CD4-positive, alpha-beta T cell (primary cell): ENCODE measurements at regions of chr10 and their contacts with region 1.

Region 1: GRCh38 chr10:98467506-98468346 is 21.0 kb upstream of the HPS1 start:
- DNase-seq: peak; percentile 29 to 89 (median 54)
- ATAC-seq: peak; percentile 94
- H3K4me3 ChIP-seq: peak overlapping the region; percentile 76
- H3K4me3 Mint-ChIP-seq: peak overlapping the region; percentile 99
- H3K27ac ChIP-seq: no peak overlapping the region
- H3K27ac Mint-ChIP-seq: peak overlapping the region; percentile 40
- H3K4me1 ChIP-seq: peaks cover 5% of the 10 kb centered on the region
- H3K4me1 Mint-ChIP-seq: peaks cover 10% of the 10 kb centered on the region
- H3K27me3 ChIP-seq: peaks cover 0 to 7% of the 10 kb centered on the region in 2 experiments
- H3K27me3 Mint-ChIP-seq: peaks cover 13% of the 10 kb centered on the region
- CTCF ChIP-seq: peak; percentile 75

Region 2: GRCh38 chr10:97903128-97904017 is 564.4 kb before region 1 on chr10:
- CTCF ChIA-PET with region 1: no interaction called
- POLR2A ChIA-PET with region 1: no interaction called
- intact Hi-C with region 1: no loop called
- DNase-seq: no peak
- ATAC-seq: no peak
- H3K4me3 ChIP-seq: no peak overlapping the region
- H3K4me3 Mint-ChIP-seq: no peak overlapping the region
- H3K27ac ChIP-seq: no peak overlapping the region
- H3K27ac Mint-ChIP-seq: no peak overlapping the region
- H3K4me1 ChIP-seq: no peaks in the 10 kb centered on the region
- H3K4me1 Mint-ChIP-seq: no peaks in the 10 kb centered on the region
- H3K27me3 ChIP-seq: peaks cover 0 to 3% of the 10 kb centered on the region in 2 experiments
- H3K27me3 Mint-ChIP-seq: peaks cover 32% of the 10 kb centered on the region
- CTCF ChIP-seq: no peak

Region 3: GRCh38 chr10:98224509-98224908 is 243.2 kb before region 1 on chr10:
- CTCF ChIA-PET with region 1: no interaction called
- POLR2A ChIA-PET with region 1: no interaction called
- intact Hi-C with region 1: no loop called
- DNase-seq: no peak
- ATAC-seq: no peak
- H3K4me3 ChIP-seq: no peak overlapping the region
- H3K4me3 Mint-ChIP-seq: no peak overlapping the region
- H3K27ac ChIP-seq: no peak overlapping the region
- H3K27ac Mint-ChIP-seq: no peak overlapping the region
- H3K4me1 ChIP-seq: no peaks in the 10 kb centered on the region
- H3K4me1 Mint-ChIP-seq: peaks cover 21% of the 10 kb centered on the region
- H3K27me3 ChIP-seq: no peaks in the 10 kb centered on the region
- H3K27me3 Mint-ChIP-seq: no peaks in the 10 kb centered on the region
- CTCF ChIP-seq: no peak

Region 4: DNA sequence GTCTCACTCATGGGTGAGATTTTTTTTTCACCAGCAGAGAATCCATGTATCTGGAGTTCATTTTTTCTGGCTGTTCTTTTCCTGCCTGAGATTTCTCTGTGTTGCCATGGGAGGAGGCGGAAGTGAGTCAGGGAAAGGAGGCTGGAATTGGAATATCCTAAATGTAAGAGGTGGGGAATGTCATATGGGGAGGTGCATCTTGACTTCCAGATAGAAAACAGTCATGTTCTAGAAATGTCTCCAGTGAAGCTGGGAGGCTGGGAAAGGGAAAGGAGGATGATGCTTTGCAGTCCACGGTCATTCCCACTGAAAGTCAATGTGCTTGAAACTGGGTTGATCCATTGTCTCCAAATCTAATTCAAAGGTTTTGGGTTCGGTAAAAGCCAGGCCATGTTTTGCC is 18.7 kb after region 1 on chr10:
- CTCF ChIA-PET with region 1: no interaction called
- POLR2A ChIA-PET with region 1: no interaction called
- intact Hi-C with region 1: no loop called
- DNase-seq: no peak
- ATAC-seq: no peak
- H3K4me3 ChIP-seq: no peak overlapping the region
- H3K4me3 Mint-ChIP-seq: no peak overlapping the region
- H3K27ac ChIP-seq: no peak overlapping the region
- H3K27ac Mint-ChIP-seq: no peak overlapping the region
- H3K4me1 ChIP-seq: peaks cover 3% of the 10 kb centered on the region
- H3K4me1 Mint-ChIP-seq: no peaks in the 10 kb centered on the region
- H3K27me3 ChIP-seq: peaks cover 0 to 2% of the 10 kb centered on the region in 2 experiments
- H3K27me3 Mint-ChIP-seq: peaks cover 26% of the 10 kb centered on the region
- CTCF ChIP-seq: no peak

Region 5: DNA sequence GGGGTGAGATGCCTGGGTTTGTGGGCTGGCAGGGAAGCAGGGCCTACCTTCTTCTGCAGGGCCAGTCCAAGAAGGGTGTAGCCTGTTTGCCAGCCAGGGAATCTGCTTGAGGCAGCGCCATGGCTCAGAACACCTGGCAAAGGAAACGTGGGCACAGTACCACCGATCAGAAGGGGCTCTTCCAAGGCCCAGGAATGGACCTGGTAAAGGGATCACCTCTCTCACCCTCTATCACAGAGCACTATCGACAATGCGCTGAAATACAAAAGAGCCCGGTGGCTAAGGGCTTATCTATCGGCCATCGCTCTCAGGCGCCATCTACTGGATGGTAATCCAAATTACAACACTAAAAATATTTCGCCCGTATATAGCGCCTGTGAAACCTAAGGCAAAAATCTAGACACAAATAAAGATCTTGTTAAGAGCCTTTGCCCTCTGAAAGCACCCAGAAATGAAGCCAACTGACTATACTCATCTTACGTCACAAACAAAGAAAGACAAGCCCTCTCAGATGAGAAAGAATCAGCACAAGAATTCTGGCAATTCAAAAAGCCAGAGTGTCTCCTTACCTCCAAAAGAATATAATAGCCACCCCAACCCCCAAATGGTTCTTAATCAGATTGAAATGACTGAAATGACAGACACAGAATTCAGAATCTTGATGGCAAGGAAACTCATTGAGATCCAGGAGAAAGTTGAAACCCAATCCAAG is 196.8 kb after region 1 on chr10:
- CTCF ChIA-PET with region 1: interaction called, 6 read pairs
- POLR2A ChIA-PET with region 1: no interaction called
- intact Hi-C with region 1: loop called in 1 of 2 experiments (anchors 1 kb)
- DNase-seq: peak in 8 of 14 experiments; percentile 0 to 65 (median 27)
- ATAC-seq: no peak
- H3K4me3 ChIP-seq: no peak overlapping the region
- H3K4me3 Mint-ChIP-seq: no peak overlapping the region
- H3K27ac ChIP-seq: no peak overlapping the region
- H3K27ac Mint-ChIP-seq: no peak overlapping the region
- H3K4me1 ChIP-seq: no peaks in the 10 kb centered on the region
- H3K4me1 Mint-ChIP-seq: no peaks in the 10 kb centered on the region
- H3K27me3 ChIP-seq: peaks cover 0 to 3% of the 10 kb centered on the region in 2 experiments
- H3K27me3 Mint-ChIP-seq: peaks cover 31% of the 10 kb centered on the region
- CTCF ChIP-seq: peak; percentile 61

Region 6: GRCh38 chr10:99248824-99249223 is 781.1 kb after region 1 on chr10:
- CTCF ChIA-PET with region 1: interaction called, 14 read pairs
- POLR2A ChIA-PET with region 1: interaction called, 8 read pairs
- intact Hi-C with region 1: loop called (anchors 1 kb)
- DNase-seq: no peak
- ATAC-seq: no peak
- H3K4me3 ChIP-seq: no peak overlapping the region
- H3K4me3 Mint-ChIP-seq: no peak overlapping the region
- H3K27ac ChIP-seq: no peak overlapping the region
- H3K27ac Mint-ChIP-seq: no peak overlapping the region
- H3K4me1 ChIP-seq: no peaks in the 10 kb centered on the region
- H3K4me1 Mint-ChIP-seq: no peaks in the 10 kb centered on the region
- H3K27me3 ChIP-seq: peaks cover 4 to 8% of the 10 kb centered on the region in 2 experiments
- H3K27me3 Mint-ChIP-seq: peaks cover 45% of the 10 kb centered on the region
- CTCF ChIP-seq: no peak

Region 7: DNA sequence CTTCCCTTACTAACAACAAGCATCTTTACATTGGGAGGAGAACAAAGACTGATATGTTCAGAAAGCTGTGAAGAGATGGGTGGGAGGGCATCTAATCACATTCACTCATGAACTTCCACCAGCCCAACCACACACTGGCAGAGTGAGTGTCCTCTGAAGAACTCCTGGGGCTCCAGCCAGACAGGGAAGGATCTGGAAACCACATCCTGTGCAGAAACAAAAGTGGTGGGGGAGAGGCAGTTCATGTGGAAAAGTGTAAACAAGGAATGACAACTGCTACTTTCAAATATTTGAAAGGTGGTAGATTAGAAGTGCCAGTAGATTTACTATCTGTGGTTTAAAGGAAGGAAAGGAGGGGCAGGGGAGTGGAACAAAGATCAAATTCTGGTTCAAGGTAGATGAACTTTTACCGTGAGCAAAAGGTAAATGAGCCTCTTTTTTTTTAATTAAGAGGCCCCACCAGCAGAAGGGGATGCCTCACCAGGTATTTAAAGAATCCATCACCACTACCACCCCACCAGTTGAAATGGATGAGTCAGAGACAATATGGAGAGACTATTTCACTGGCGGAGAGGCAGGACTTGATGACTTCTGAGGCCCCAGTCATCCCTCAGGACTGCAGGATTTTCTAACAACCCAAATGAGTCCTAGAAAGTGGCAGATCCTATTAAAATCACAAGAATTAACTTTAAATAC is 928.2 kb after region 1 on chr10:
- CTCF ChIA-PET with region 1: no interaction called
- POLR2A ChIA-PET with region 1: no interaction called
- intact Hi-C with region 1: loop called in 1 of 2 experiments (anchors 10 kb)
- DNase-seq: no peak
- ATAC-seq: no peak
- H3K4me3 ChIP-seq: no peak overlapping the region
- H3K4me3 Mint-ChIP-seq: no peak overlapping the region
- H3K27ac ChIP-seq: no peak overlapping the region
- H3K27ac Mint-ChIP-seq: no peak overlapping the region
- H3K4me1 ChIP-seq: peaks cover 4% of the 10 kb centered on the region
- H3K4me1 Mint-ChIP-seq: peaks cover 6% of the 10 kb centered on the region
- H3K27me3 ChIP-seq: no peaks in the 10 kb centered on the region
- H3K27me3 Mint-ChIP-seq: no peaks in the 10 kb centered on the region
- CTCF ChIP-seq: no peak

Region 8: DNA sequence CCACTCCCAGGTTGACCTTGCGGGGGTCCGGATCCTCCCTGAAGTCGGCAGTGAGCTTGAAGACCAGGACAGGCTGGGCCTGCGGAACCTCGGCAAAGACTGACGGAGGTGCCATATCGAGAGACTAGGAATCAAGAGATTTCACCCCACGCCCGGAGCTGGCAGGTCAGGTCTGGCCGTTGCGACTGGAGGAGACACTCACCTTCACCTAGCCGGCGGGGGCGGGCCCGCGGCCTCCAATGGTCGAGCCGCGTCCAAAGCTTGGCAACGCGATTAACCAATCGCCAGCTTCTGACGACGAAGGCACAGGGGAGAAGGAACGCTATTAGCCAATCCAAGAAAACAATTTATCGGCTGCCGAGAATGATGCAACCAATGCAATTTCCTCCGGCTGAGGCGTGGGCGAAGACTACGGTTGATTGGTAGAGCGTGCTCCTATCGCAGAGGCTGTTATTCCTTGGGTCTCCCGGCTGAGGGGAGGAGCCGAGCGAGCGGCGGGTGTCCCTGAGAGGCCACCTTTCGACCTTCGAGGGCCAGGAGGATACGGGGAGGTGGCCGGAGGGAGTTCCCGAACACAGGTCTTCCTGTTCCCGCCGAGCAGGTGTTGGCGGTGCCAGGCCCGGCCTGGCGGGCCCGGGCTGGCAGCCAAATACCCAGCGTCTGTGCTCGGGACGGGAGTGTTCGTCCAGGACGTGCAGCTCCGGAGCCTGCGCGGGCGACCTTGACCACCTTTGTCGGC is 962.9 kb after region 1 on chr10 and contains the start of gene GOT1:
- CTCF ChIA-PET with region 1: no interaction called
- POLR2A ChIA-PET with region 1: no interaction called
- intact Hi-C with region 1: loop called in 1 of 2 experiments (anchors 10 kb)
- DNase-seq: peak; percentile 79 to 98 (median 87)
- ATAC-seq: peak; percentile 93
- H3K4me3 ChIP-seq: peak within 1 kb of the TSS; percentile 93
- H3K4me3 Mint-ChIP-seq: peak within 1 kb of the TSS; percentile 91
- H3K27ac ChIP-seq: peak within 1 kb of the TSS; percentile 52 to 67
- H3K27ac Mint-ChIP-seq: peak within 1 kb of the TSS; percentile 95
- H3K4me1 ChIP-seq: peaks cover 17% of the 10 kb centered on the region
- H3K4me1 Mint-ChIP-seq: peaks cover 47% of the 10 kb centered on the region
- H3K27me3 ChIP-seq: no peaks in the 10 kb centered on the region
- H3K27me3 Mint-ChIP-seq: no peaks in the 10 kb centered on the region
- CTCF ChIP-seq: no peak
- total RNA-seq, gene GOT1: 3.5 to 5.7 TPM

Region 9: GRCh38 chr10:99620713-99621453 is 1153.2 kb after region 1 on chr10:
- CTCF ChIA-PET with region 1: no interaction called
- POLR2A ChIA-PET with region 1: no interaction called
- intact Hi-C with region 1: loop called (anchors 10 kb)
- DNase-seq: peak; percentile 68 to 98 (median 83)
- ATAC-seq: peak; percentile 85
- H3K4me3 ChIP-seq: peak overlapping the region; percentile 82
- H3K4me3 Mint-ChIP-seq: peak overlapping the region; percentile 91
- H3K27ac ChIP-seq: peak overlapping the region; percentile 93 to 96
- H3K27ac Mint-ChIP-seq: peak overlapping the region; percentile 91
- H3K4me1 ChIP-seq: peaks cover 19% of the 10 kb centered on the region
- H3K4me1 Mint-ChIP-seq: peaks cover 52% of the 10 kb centered on the region
- H3K27me3 ChIP-seq: no peaks in the 10 kb centered on the region
- H3K27me3 Mint-ChIP-seq: no peaks in the 10 kb centered on the region
- CTCF ChIP-seq: no peak

Region 10: GRCh38 chr10:100046021-100046486 is 1578.3 kb after region 1 on chr10:
- CTCF ChIA-PET with region 1: no interaction called
- POLR2A ChIA-PET with region 1: no interaction called
- intact Hi-C with region 1: loop called in 1 of 2 experiments (anchors 5 kb)
- DNase-seq: peak; percentile 66 to 88 (median 78)
- ATAC-seq: peak; percentile 56
- H3K4me3 ChIP-seq: no peak overlapping the region
- H3K4me3 Mint-ChIP-seq: no peak overlapping the region
- H3K27ac ChIP-seq: no peak overlapping the region
- H3K27ac Mint-ChIP-seq: no peak overlapping the region
- H3K4me1 ChIP-seq: no peaks in the 10 kb centered on the region
- H3K4me1 Mint-ChIP-seq: no peaks in the 10 kb centered on the region
- H3K27me3 ChIP-seq: no peaks in the 10 kb centered on the region
- H3K27me3 Mint-ChIP-seq: peaks cover 10% of the 10 kb centered on the region
- CTCF ChIP-seq: peak; percentile 83